Activated T-helper 1 cell treated with anti-CD3 and anti-CD28 coated beads, Interleukin-12 subunit alpha, Interleukin-12 subunit beta, Interleukin-2, Interleukin-4 antibody, amounts not matched to agents 30 ng/mL and 10 ng/mL and 1 ng/mL, durations not matched to agents 14 hours and 24 hours and 36 hours (primary cell): ENCODE measurements at regions of chr7 and their contacts with region 1.

Region 1: GRCh38 chr7:5396999-5397663 is 26.5 kb downstream of the TNRC18 start:
- DNase-seq: peak; percentile 81
- H3K4me3 Mint-ChIP-seq: peak overlapping the region; percentile 82
- H3K27ac Mint-ChIP-seq: peak overlapping the region; percentile 91
- H3K4me1 Mint-ChIP-seq: peaks cover 29% of the 10 kb centered on the region
- H3K27me3 Mint-ChIP-seq: no peaks in the 10 kb centered on the region

Region 2: DNA sequence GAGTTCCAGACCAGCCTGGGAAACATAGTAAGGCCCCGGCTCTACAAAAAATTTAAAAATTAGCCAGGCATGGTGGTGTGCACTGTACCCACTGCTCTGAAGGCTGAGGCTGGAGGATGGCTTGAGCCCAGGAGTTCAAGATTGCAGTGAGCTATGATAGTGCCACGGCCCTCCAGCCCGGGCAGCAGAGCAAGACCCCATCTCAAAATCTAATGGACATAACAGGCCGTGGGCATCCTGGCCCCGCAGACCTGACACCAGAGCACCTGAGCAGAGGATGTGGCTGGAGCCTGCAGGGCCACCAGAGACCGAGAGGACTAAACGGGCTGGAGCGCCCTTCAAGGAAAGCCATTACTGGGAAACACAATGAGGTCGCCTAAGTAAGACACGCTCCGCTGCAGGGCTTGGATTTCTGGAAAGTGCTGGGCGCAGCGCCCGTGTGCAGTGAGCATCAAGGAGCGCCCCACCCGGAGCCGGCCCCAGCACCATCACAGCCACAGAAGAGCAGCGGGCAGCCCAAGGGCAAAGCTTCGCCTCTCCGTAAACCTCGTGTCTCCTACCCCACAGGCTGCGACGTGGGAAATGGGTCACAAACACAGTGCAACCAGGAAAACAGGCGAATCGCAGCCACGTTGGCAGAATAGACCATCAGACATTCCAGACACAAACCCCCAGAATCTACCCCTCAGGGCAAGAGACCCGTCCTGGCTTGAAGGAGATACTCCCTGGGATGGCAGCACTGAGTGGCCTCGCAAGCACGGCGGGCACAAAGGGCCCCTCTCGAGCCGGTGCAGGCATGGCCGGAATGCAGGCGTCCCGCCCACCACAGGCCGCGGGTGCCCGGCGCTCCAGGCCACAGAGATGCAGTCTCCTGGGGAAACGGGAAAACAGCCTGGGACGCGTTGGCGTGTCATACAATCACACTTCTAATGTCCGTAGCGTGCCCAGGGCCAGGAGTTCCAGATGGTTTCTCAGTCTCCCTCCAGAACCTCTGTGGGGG is 518.5 kb before region 1 on chr7:
- intact Hi-C with region 1: no loop called
- DNase-seq: no peak
- H3K4me3 Mint-ChIP-seq: no peak overlapping the region
- H3K27ac Mint-ChIP-seq: no peak overlapping the region
- H3K4me1 Mint-ChIP-seq: peaks cover 8% of the 10 kb centered on the region
- H3K27me3 Mint-ChIP-seq: peaks cover 19% of the 10 kb centered on the region

Region 3: GRCh38 chr7:5193880-5194279 is 203.3 kb before region 1 on chr7:
- intact Hi-C with region 1: loop called (anchors 1 kb)
- DNase-seq: no peak
- H3K4me3 Mint-ChIP-seq: no peak overlapping the region
- H3K27ac Mint-ChIP-seq: no peak overlapping the region
- H3K4me1 Mint-ChIP-seq: peaks cover 27% of the 10 kb centered on the region
- H3K27me3 Mint-ChIP-seq: no peaks in the 10 kb centered on the region

Region 4: GRCh38 chr7:5296611-5297226 is 100.4 kb before region 1 on chr7:
- intact Hi-C with region 1: loop called (anchors 1 kb)
- DNase-seq: peak; percentile 61
- H3K4me3 Mint-ChIP-seq: peak overlapping the region; percentile 78
- H3K27ac Mint-ChIP-seq: peak overlapping the region; percentile 34
- H3K4me1 Mint-ChIP-seq: peaks cover 13% of the 10 kb centered on the region
- H3K27me3 Mint-ChIP-seq: peaks cover 21% of the 10 kb centered on the region

Region 5: GRCh38 chr7:5348134-5349004 is 48.8 kb before region 1 on chr7:
- intact Hi-C with region 1: no loop called
- DNase-seq: no peak
- H3K4me3 Mint-ChIP-seq: no peak overlapping the region
- H3K27ac Mint-ChIP-seq: no peak overlapping the region
- H3K4me1 Mint-ChIP-seq: no peaks in the 10 kb centered on the region
- H3K27me3 Mint-ChIP-seq: no peaks in the 10 kb centered on the region

Region 6: DNA sequence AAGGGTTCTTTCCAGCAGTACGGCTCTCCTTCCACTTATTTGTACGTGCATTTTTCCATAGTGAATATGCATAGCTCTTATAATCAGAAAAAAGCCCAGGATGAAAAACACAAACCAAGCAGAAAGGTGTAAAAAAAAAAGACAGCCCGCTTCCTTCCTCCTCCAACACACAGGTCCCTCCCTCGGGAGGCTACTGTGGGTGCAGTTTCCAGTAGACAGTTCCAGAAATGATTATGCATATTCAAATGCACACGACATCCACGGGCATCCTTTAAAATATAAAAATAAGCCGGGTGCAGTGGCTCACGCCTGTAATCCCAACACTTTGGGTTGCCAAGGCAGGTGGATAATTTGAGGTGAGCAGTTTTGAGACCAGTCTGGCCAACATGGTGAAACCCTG is 33.4 kb before region 1 on chr7:
- intact Hi-C with region 1: loop called (anchors 2 kb)
- DNase-seq: no peak
- H3K4me3 Mint-ChIP-seq: peak overlapping the region; percentile 7
- H3K27ac Mint-ChIP-seq: peak overlapping the region; percentile 61
- H3K4me1 Mint-ChIP-seq: peaks cover 26% of the 10 kb centered on the region
- H3K27me3 Mint-ChIP-seq: no peaks in the 10 kb centered on the region

Region 7: DNA sequence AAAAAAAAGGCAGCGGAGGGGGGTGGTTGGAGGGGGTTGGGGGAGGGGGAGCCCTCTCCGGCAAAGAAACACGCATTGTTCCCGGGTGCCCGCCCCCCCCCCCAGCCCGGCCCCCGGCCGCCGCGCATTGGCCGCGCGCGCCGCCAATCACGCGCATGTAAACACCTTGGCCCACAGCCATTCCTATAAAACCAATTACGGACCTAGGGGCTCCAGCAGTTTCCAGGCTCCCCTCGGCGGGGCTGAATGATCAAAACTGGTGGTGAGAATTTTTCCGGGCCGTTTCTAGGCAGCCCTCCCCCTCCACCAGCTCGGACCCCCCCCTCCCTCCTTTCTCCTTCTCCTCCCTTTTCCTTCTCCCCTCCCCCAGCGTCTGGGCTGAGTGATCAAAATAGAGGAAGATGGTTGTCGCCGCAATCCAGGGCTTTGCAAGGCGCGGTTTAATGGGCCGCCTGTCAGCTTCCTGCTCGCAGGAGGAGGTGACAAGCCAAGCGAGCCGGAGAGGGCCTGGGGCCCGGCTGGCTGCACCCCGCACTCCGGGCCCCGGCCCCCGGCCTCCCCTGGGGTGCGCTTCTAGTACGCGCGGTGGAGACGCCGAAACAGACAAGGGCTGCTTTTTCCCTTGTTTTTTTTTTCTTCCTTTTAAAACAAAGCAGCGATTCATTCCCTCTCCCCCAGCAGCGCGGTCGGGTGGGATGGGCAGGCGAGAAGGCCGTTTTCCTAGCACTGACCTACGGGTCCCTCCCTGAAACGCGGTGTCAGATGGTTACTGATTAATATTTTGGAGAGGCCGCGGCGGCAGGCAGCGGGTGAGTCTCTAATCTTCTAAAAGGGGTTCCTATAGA is 26.9 kb after region 1 on chr7:
- intact Hi-C with region 1: loop called (anchors 2 kb)
- DNase-seq: no peak
- H3K4me3 Mint-ChIP-seq: peak overlapping the region; percentile 79
- H3K27ac Mint-ChIP-seq: peak overlapping the region; percentile 81
- H3K4me1 Mint-ChIP-seq: peaks cover 17% of the 10 kb centered on the region
- H3K27me3 Mint-ChIP-seq: peaks cover 48% of the 10 kb centered on the region

Region 8: GRCh38 chr7:5780801-5781496 is 383.8 kb after region 1 on chr7:
- intact Hi-C with region 1: loop called (anchors 1 kb)
- DNase-seq: peak; percentile 19
- H3K4me3 Mint-ChIP-seq: peak overlapping the region; percentile 86
- H3K27ac Mint-ChIP-seq: peak overlapping the region; percentile 86
- H3K4me1 Mint-ChIP-seq: peaks cover 31% of the 10 kb centered on the region
- H3K27me3 Mint-ChIP-seq: no peaks in the 10 kb centered on the region

Region 9: DNA sequence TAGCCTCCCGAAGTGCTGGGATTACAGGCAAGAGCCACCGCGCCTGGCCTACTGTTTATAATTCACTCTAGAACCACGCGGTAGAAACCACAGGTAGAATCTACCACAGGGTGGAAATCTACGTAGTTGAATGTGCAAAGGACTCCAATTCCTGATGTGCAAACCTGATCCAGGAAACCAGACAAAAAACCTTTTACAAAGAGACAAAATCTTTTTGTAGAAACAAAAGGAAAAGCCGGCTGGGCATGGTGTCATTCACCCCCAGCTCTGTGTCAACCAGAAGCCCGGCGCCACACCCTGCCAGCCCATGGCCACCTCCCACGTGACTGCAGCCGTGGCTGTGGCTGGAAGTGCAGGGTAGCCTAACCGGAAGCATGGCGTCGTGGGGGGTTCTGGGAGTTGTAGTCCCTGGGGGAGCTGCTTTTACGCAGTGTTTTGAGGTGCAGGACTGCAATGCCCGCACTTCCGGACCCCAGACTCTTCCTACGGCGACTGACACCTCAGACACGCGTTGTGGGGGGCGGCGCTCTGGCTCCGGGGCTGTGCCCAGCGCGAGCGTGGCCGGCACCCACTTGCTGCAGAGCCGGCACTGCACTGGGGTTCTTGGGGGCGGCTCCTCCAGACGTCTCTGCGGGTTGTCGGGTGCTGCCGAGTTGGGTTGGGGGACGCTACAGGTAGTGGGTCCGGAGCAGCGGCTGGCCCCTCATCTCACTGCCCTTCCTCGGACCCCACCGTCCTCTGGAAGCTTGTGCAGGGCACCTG is 425.8 kb after region 1 on chr7:
- intact Hi-C with region 1: loop called (anchors 2 kb)
- DNase-seq: peak; percentile 95
- H3K4me3 Mint-ChIP-seq: peak overlapping the region; percentile 87
- H3K27ac Mint-ChIP-seq: peak overlapping the region; percentile 82
- H3K4me1 Mint-ChIP-seq: peaks cover 12% of the 10 kb centered on the region
- H3K27me3 Mint-ChIP-seq: no peaks in the 10 kb centered on the region